Dorsolateral prefrontal cortex (tissue), 120 donors: ENCODE measurements at regions of chr10 and their contacts with region 1.

Region 1: GRCh38 chr10:46250898-46251856 is 35.6 kb upstream of the ANTXRL start:
- DNase-seq: peak in 2 of 10 donors; percentile 10 to 17
- H3K4me3 ChIP-seq: no peak overlapping the region
- H3K27ac ChIP-seq: no peak overlapping the region
- H3K27me3 ChIP-seq: no peaks in the 10 kb centered on the region
- CTCF ChIP-seq: no peak

Region 2: DNA sequence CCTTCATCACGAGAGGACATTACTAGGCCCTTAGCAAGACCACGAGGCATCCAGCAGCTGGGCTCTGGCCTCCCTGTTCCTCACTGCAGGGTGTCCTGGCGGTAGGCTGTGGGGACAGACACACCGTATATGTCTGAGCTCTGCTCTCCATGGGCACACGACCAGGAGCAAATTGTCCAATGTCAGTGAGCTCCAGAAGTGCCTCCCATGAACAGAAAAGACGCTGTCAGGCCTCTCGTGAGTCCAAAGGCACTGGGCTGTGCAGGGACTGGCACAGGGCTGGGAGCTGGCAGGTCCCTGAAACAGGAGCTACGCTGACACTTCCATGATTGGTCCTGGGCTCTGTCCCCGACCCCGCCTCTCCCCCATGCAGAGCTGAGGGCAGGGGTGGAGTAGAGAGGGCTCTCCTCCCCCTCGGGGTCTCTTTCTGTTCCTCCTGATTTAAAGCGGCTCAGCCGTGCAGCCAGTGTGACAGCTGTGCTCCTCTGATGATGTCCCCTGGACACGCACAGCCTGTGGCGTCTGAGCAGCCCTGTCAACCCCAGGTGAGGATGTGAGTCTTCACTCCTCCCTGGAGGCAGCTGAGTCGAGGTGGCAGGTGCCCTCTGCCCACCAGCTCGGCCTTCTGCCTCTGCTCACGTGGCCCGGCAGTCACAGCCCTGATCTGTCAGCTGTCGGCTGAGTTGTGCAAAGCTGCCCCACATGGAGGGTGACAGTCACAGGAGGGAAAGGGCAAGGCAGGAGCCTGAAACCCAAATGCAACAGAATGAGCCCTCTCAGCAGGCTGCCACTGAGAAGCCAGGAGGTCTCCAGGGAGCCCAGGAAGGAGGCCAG is 48.6 kb after region 1 on chr10:
- intact Hi-C with region 1: no loop called
- DNase-seq: peak in 3 of 10 donors; percentile 22 to 30 (median 27)
- H3K4me3 ChIP-seq: no peak overlapping the region
- H3K27ac ChIP-seq: no peak overlapping the region
- H3K27me3 ChIP-seq: no peaks in the 10 kb centered on the region
- CTCF ChIP-seq: no peak

Region 3: DNA sequence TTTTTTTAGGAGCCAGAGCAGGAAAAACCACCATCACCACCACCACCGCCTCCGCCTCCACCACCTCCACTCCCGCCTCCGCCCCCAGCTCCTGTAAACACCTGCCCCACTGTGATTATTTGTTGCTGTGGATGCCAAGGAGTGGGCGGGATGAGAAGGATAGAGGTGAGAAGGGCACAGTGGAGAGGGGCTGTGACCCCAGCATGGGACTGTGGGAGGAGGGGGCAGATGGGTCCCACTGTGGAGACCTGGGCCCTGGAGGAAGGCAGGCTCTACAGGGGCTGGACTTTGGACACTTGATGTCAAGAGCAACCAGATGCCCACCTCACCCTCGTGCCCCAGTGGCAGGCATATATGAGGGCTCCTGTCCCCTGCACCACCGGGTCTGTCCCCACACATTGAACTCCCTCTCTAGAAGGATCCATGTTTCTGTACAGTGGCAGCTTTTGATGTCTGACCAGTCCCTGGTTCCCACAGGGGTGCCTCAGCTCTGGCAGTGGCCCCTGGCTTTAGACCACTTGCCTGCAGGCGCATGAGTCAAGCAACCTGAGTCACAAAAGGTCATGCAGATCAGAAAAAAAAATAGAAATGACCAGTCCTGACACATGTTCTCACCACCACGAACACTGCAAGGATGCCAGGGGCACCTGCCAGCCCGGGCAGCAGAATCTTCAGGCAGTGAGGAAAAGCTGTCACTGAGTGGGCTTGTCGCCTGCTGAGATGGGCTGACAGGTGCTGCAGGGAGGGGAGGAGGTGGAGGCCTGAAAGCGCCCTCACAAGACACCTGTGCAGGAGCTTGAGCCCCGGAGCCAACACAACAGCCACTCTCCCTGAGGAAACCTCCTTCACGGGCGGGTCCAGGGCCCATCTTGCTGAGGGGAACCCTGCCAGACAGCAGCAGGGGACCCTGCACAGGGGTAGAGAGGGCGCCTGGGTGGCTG is 60.6 kb after region 1 on chr10:
- intact Hi-C with region 1: loop called in 1 of 2 experiments (anchors 1 kb)
- DNase-seq: peak in 3 of 10 donors; percentile 16 to 34 (median 21)
- H3K4me3 ChIP-seq: no peak overlapping the region
- H3K27ac ChIP-seq: no peak overlapping the region
- H3K27me3 ChIP-seq: no peaks in the 10 kb centered on the region
- CTCF ChIP-seq: no peak